Left ventricle myocardium superior (tissue), 1 donor: ENCODE measurements at regions of chr3 and their contacts with region 1.

Region 1: GRCh38 chr3:33717866-33718594 is at the start of gene CLASP2:
- DNase-seq: peak; percentile 94
- ATAC-seq: peak; percentile 98
- total RNA-seq, gene CLASP2: 88.1 TPM

Region 2: DNA sequence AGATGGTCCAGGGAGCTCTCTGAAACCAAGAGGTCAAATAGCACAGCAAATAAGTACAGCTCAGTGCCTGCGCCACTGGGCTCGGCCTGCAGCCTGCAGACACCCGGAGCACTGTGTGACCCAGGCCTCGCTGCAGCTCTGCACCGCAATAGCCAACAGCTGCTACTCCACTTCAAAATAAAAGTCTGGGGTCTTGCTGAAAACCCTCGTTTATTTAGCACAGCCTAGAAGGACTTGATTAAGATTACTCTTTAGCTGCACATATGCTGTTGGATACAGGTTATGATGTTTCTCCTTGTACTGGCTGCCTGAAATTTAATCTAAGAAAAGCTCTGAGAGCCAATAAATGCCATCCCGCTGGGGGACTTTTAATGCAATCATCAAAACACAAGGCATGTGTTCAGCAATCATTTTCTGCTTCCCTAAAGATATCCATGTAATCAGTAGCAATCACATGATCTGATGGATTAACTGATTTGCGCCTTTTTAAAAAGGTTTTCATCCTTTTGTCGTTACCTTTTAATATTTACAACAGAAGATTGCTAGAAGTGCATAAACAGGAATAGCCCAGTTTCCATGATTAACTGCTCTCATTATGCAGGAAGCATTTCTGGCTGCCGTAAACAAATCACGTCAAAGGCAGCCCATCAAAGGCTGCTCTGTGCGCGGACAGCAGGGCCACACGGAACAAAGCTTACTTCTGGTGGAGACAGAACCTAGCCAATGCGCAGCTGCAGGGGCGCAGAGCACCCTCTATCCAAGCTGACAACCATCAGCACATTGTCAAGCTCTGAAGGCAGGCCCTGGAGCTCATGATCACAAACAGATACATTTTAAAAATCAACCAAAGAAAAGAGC is 58.8 kb before region 1 on chr3:
- intact Hi-C with region 1: loop called (anchors 2 kb)
- DNase-seq: peak; percentile 87
- ATAC-seq: peak; percentile 99

Region 3: DNA sequence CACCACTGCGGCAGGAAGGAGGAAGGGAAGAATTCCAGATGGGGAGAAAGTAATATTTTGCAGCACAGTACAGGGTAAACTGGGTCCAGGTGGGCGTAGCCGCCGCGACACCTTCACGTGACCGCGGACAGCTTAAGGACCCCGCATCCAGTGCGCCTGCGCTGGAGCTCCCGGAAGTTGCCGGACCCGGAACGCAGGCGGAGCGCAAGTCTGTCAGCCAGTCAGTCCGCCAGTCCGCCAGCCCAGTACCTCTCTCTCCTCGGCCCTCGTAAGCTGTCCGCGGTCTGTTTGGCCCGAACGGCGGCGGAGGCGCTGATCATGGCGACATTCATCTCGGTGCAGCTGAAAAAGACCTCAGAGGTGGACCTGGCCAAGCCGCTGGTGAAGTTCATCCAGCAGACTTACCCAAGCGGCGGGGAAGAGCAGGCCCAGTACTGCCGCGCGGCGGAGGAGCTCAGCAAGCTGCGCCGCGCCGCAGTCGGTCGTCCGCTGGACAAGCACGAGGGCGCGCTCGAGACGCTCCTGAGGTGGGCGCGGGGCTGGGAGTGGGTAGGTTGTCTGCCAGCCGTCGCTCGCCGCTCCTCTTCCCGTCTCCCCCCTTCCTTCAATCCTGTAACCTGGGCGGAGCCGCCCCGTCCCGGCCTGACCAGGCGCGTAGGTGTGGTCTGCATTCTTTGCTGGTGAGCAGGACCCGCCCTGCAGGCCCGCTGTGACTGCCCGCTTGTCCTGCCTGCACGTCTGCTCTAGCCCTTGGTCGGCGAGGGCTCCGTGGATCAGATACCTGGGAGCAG is 80.6 kb after region 1 on chr3 and contains the start of gene PDCD6IP:
- intact Hi-C with region 1: loop called (anchors 10 kb)
- DNase-seq: peak; percentile 96
- ATAC-seq: peak; percentile 96
- total RNA-seq, gene PDCD6IP: 133 TPM

Region 4: DNA sequence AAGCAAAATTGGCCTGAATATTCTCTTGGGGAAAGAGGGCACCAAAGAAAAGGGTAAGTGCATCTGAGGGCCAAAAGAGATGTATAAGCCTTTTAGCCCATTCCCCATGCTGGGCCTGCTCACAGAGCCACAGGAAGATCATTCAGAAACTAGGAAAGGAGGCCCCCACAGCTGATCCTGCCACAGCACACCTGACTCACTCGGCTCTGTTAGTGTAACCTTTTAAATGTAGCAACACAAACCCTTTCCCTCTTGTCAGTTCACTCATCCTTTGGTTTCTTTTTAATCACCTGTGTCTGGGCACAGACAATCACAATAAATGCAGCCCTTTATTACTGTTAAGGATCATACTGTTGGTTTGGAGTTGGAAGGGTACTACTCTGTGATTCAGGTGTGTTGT is 150.3 kb after region 1 on chr3:
- intact Hi-C with region 1: no loop called
- DNase-seq: no peak
- ATAC-seq: no peak